ENCODE measurements at regions of chr4 and their contacts with region 1.

Region 1: DNA sequence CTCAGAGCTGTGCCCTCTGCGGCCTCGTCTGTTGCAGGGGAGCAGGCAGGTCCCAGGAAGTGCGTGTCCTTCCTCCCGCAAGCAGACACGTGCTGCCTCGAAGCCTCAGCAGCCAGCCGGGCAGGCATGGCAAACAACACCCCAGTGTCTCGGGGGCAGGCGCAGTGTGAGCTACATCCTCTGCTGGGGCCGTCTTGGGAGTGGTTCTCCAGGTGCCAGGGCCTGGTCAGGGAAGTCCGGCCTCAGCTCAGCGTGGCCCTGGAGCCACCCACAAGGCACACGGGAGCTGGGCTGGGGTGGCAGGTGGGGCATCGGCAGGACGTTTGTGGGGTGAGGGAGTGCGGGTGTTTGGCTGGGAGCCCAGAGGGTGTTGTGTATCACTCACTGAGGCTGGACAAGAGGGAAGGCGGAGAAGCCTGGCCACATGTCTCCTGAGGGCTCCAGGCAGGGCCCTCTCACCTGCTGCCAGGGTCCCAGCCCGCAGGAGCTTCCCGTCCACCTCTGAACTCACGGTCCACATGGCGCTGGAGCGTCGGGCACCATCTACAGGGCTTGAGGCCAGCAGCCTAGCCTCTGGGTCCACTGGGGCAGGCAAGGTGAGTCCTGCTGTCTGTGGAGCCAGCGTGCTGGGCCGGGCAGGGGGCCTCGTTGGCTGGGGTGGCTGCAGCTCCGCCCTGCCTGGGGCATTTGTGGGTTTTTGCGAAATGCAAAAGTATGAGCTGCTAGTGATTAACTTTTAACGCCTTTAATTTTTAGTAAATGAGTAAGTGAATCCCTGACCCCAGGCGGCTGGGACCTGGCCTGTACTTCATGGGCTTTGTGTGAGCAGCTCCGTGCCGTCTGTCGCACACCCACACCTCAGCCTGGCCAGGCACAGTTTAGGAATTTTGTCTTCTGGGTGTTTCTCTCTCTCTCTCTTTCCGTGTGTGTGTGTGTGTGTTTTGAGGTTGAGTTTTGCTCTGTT is 17.3 kb upstream of the UVSSA start:
- DNase-seq: no peak
- H3K4me3 Mint-ChIP-seq: peak overlapping the region; percentile 40
- H3K27ac Mint-ChIP-seq: peak overlapping the region; percentile 85
- H3K4me1 Mint-ChIP-seq: peaks cover 36% of the 10 kb centered on the region
- H3K27me3 Mint-ChIP-seq: no peaks in the 10 kb centered on the region

Region 2: GRCh38 chr4:1309261-1310010 is 20.3 kb before region 1 on chr4:
- CTCF ChIA-PET with region 1: no interaction called
- POLR2A ChIA-PET with region 1: interaction called, 18 read pairs
- DNase-seq: peak; percentile 59
- H3K4me3 Mint-ChIP-seq: peak overlapping the region; percentile 45
- H3K27ac Mint-ChIP-seq: peak overlapping the region; percentile 60
- H3K4me1 Mint-ChIP-seq: peaks cover 72% of the 10 kb centered on the region
- H3K27me3 Mint-ChIP-seq: no peaks in the 10 kb centered on the region